Activated CD8-positive, alpha-beta T cell treated with anti-CD3 and anti-CD28 coated beads for 36 hours (primary cell): ENCODE measurements at regions of chr19 and their contacts with region 1.

Region 1: GRCh38 chr19:16111160-16111908 is at the start of gene RAB8A:
- DNase-seq: peak; percentile 99
- ATAC-seq: peak; percentile 93
- H3K4me3 Mint-ChIP-seq: peak within 1 kb of the TSS; percentile 95
- H3K27ac Mint-ChIP-seq: peak within 1 kb of the TSS; percentile 98
- H3K4me1 Mint-ChIP-seq: peaks cover 35% of the 10 kb centered on the region
- H3K27me3 Mint-ChIP-seq: no peaks in the 10 kb centered on the region
- CTCF ChIP-seq: peak; percentile 92
- total RNA-seq, gene RAB8A: 123 to 128 TPM

Region 2: GRCh38 chr19:16088351-16089009 is 22.9 kb before region 1 on chr19:
- CTCF ChIA-PET with region 1: interaction called, 11 read pairs
- POLR2A ChIA-PET with region 1: interaction called, 8 read pairs
- intact Hi-C with region 1: no loop called
- DNase-seq: no peak
- ATAC-seq: no peak
- H3K4me3 Mint-ChIP-seq: no peak overlapping the region
- H3K27ac Mint-ChIP-seq: no peak overlapping the region
- H3K4me1 Mint-ChIP-seq: peaks cover 32% of the 10 kb centered on the region
- H3K27me3 Mint-ChIP-seq: no peaks in the 10 kb centered on the region
- CTCF ChIP-seq: no peak

Region 3: GRCh38 chr19:16095071-16095571 is 16.2 kb before region 1 on chr19:
- CTCF ChIA-PET with region 1: interaction called, 15 read pairs
- POLR2A ChIA-PET with region 1: interaction called, 12 read pairs
- intact Hi-C with region 1: no loop called
- DNase-seq: peak; percentile 77
- ATAC-seq: peak; percentile 85
- H3K4me3 Mint-ChIP-seq: peak overlapping the region; percentile 44
- H3K27ac Mint-ChIP-seq: peak overlapping the region; percentile 95
- H3K4me1 Mint-ChIP-seq: peaks cover 29% of the 10 kb centered on the region
- H3K27me3 Mint-ChIP-seq: no peaks in the 10 kb centered on the region
- CTCF ChIP-seq: no peak